ENCODE measurements at regions of chr1 and their contacts with region 1.

Region 1: DNA sequence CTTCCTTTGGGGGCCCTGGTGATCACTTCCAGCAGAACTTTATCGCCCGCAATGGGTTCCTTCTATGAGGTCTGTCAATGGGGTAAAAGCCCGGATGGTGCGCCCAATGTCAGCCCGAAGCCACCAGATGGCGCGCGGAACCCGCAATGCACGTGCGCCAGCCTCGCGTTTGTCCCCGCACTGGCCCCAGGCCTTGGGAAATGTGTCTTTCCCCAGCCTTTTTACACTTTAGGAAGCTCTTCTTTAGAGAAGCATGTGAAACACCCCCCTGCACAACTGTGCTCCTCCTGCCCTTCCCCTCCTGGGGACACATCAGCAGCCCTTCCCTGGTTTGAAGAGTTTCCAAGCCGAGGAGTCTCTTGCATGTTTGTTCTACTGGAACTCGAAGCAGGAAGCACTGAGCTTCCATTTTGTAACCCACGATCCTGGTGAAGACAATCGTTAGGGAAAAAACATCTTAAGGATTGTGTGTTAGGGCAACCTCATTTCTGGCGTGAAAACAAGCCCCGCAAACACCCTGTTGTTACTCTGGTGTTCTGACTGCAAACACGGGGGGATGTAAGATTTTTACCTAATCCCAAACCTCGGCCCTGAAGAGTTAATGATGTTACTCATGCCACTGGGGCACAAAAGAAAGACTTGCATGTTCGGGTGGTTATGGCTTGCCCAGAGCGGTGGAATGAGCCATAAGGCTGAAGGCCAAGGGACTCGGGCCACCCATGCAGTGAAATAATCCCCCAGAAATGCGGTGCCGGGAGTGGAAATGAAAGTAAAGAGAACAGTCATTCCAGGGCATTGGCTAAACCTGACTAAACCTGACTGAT is 20.4 kb upstream of the TARBP1 start:
- DNase-seq: peak; percentile 90 to 95 (median 92)
- ATAC-seq: peak; percentile 99
- H3K4me3 ChIP-seq: no peak overlapping the region
- H3K27ac ChIP-seq: peak overlapping the region; percentile 33
- H3K4me1 ChIP-seq: peaks cover 11 to 37% of the 10 kb centered on the region in 2 experiments
- H3K27me3 ChIP-seq: no peaks in the 10 kb centered on the region
- CTCF ChIP-seq: peak; percentile 95 to 99 (median 98)
- EP300 ChIP-seq: peak; percentile 14; the same call in 1 of the 2 replicates
- POLR2A ChIP-seq: no peak
- RAD21 ChIP-seq: peak; percentile 100

Region 2: DNA sequence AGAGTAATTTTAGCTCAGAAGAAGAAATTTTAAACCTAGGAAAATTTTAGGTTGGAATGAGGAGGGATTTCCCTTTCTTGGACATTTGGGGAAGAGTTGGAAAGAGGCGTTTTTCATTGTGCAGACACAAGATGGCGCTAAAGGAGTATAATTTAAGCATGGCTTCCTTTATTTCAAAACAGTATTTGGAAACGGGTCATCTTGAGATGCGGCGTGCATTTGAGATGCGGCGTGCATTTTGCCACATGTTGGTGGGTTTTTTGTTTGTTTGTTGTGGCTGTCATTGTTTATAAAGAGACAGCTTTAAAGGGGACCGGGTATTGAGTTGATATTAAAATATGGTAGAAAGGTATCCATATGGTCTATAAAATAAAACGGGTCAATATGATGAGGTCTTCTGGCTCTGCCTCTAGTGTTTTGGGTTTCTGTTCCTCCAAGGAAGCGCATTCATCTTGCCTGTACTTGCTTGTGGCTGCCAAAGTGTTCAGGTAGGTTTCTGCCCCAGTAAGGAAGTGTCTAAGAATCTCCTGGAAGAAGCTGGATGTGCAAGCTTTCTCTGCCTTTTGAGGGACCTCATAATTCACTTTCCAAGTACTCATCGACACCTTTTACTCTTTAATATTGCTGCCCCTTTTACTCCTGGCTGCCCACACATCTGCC is 384.6 kb before region 1 on chr1:
- CTCF ChIA-PET with region 1: no interaction called
- POLR2A ChIA-PET with region 1: no interaction called
- in situ Hi-C with region 1: no loop called
- intact Hi-C with region 1: loop called (anchors 5 kb)
- DNase-seq: peak; percentile 35 to 57 (median 41)
- ATAC-seq: peak; percentile 76
- H3K4me3 ChIP-seq: no peak overlapping the region
- H3K27ac ChIP-seq: no peak overlapping the region
- H3K4me1 ChIP-seq: 0 out of 5 replicates have a peak, but pooled peaks cover 0 to 3% of the 10 kb centered on the region in 2 experiments
- H3K27me3 ChIP-seq: peaks cover 7 to 22% of the 10 kb centered on the region in 2 experiments; a peak in 4 of 5 replicates
- CTCF ChIP-seq: peak; percentile 59 to 86 (median 75)
- EP300 ChIP-seq: no peak
- POLR2A ChIP-seq: no peak
- RAD21 ChIP-seq: peak; percentile 65 to 73

Region 3: GRCh38 chr1:234599617-234600417 is 100.5 kb after region 1 on chr1:
- CTCF ChIA-PET with region 1: interaction called, 9 read pairs
- POLR2A ChIA-PET with region 1: interaction called, 18 read pairs
- in situ Hi-C with region 1: loop called (anchors 5 kb)
- intact Hi-C with region 1: loop called (anchors 2 kb)
- DNase-seq: peak; percentile 84 to 92 (median 86)
- ATAC-seq: peak; percentile 74
- H3K4me3 ChIP-seq: peak overlapping the region; percentile 46
- H3K27ac ChIP-seq: peak overlapping the region; percentile 90
- H3K4me1 ChIP-seq: peaks cover 21 to 49% of the 10 kb centered on the region in 2 experiments
- H3K27me3 ChIP-seq: no peaks in the 10 kb centered on the region
- CTCF ChIP-seq: peak in 1 of 3 experiments; percentile 3; a peak in 1 of 6 replicates
- EP300 ChIP-seq: peak; percentile 18; the same call in 1 of the 2 replicates
- POLR2A ChIP-seq: peak; percentile 79
- RAD21 ChIP-seq: peak; percentile 4 to 23; a peak in 2 of 4 replicates

Region 4: GRCh38 chr1:234862944-234863515 is 363.7 kb after region 1 on chr1:
- CTCF ChIA-PET with region 1: no interaction called
- POLR2A ChIA-PET with region 1: no interaction called
- in situ Hi-C with region 1: no loop called
- intact Hi-C with region 1: loop called (anchors 2 kb)
- DNase-seq: no peak
- ATAC-seq: no peak
- H3K4me3 ChIP-seq: no peak overlapping the region
- H3K27ac ChIP-seq: no peak overlapping the region
- H3K4me1 ChIP-seq: peaks cover 26 to 42% of the 10 kb centered on the region in 2 experiments; a peak in 4 of 5 replicates
- H3K27me3 ChIP-seq: no peaks in the 10 kb centered on the region
- CTCF ChIP-seq: no peak
- EP300 ChIP-seq: no peak
- POLR2A ChIP-seq: no peak
- RAD21 ChIP-seq: 0 out of 4 replicates have a peak, but pooled peaks of 1 of the 2 experiments have one; percentile 9

Region 5: DNA sequence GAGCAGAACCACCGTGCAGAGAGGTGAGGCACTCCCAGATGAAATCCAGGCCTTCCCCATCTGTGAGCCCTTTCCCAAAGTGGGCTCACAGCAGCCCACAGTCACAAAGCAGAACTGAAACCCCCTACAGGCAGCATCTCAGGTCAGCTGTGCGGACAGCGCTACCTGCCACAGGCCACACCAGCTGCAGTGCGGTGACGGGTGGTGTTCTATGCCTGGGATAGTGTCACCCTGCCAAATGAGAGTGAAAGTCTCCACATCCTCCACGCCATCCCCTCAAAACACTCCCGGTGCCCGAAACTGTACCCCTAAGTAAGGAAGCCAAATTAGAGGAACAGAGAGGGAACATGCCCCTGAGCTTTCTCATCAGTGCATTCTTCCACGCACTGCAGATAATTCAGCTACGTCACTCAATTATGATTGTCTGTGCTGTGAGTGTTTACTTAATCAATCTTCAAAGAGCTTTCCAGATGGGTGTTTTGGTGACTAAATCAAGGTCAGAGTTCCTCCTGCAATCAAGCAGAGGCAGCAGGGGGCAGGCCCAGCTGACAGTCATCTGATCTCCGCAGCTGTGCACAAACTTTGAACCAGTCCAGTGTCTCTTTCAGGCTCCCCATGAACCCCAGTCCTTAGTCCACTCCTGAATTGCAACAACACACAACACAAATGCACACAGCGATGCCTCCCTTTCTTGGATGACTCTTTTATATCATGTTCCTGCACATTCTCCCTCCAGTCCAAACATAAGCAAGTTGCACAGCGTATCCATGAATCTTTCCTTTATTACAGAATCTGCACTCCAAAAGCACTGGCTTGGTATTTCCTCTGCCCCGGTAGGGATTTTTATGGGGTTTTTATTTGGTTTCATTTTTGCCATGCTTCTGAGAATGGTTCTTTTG is 479.3 kb after region 1 on chr1:
- CTCF ChIA-PET with region 1: no interaction called
- POLR2A ChIA-PET with region 1: no interaction called
- in situ Hi-C with region 1: no loop called
- intact Hi-C with region 1: loop called (anchors 5 kb)
- DNase-seq: peak; percentile 60 to 84 (median 78)
- ATAC-seq: peak; percentile 16
- H3K4me3 ChIP-seq: no peak overlapping the region
- H3K27ac ChIP-seq: peak overlapping the region; percentile 2; the same call in 1 of the 3 replicates
- H3K4me1 ChIP-seq: peaks cover 49 to 85% of the 10 kb centered on the region in 2 experiments
- H3K27me3 ChIP-seq: no peaks in the 10 kb centered on the region
- CTCF ChIP-seq: peak in 2 of 3 experiments; percentile 10 to 41; a peak in 3 of 6 replicates
- EP300 ChIP-seq: peak; percentile 81
- POLR2A ChIP-seq: no peak
- RAD21 ChIP-seq: peak; percentile 39 to 57

Region 6: GRCh38 chr1:235415008-235415904 is 915.9 kb after region 1 on chr1:
- CTCF ChIA-PET with region 1: no interaction called
- POLR2A ChIA-PET with region 1: no interaction called
- in situ Hi-C with region 1: no loop called
- intact Hi-C with region 1: loop called (anchors 10 kb)
- DNase-seq: peak; percentile 73 to 84 (median 76)
- ATAC-seq: peak; percentile 95
- H3K4me3 ChIP-seq: no peak overlapping the region
- H3K27ac ChIP-seq: no peak overlapping the region
- H3K4me1 ChIP-seq: peaks cover 0 to 2% of the 10 kb centered on the region in 2 experiments; a peak in 3 of 5 replicates
- H3K27me3 ChIP-seq: no peaks in the 10 kb centered on the region
- CTCF ChIP-seq: peak; percentile 90 to 96 (median 93)
- EP300 ChIP-seq: no peak
- POLR2A ChIP-seq: no peak
- RAD21 ChIP-seq: peak; percentile 73 to 84